GM12878 (cell line): ENCODE measurements at regions of chr4 and their contacts with region 1.

Region 1: GRCh38 chr4:159446266-159446976 is 343.5 kb downstream of the RAPGEF2 start:
- DNase-seq: peak; percentile 26
- ATAC-seq: peak; percentile 100
- H3K4me3 ChIP-seq: no peak overlapping the region
- H3K27ac ChIP-seq: no peak overlapping the region
- H3K4me1 ChIP-seq: no peaks in the 10 kb centered on the region
- H3K27me3 ChIP-seq: no peaks in the 10 kb centered on the region
- CTCF ChIP-seq: peak; percentile 76 to 90 (median 86)
- EP300 ChIP-seq: no peak
- POLR2A ChIP-seq: no peak
- RAD21 ChIP-seq: peak; percentile 95

Region 2: GRCh38 chr4:158496030-158496741 is 950.2 kb before region 1 on chr4:
- CTCF ChIA-PET with region 1: no interaction called
- POLR2A ChIA-PET with region 1: no interaction called
- RAD21 ChIA-PET with region 1: no interaction called
- SMC1A ChIA-PET with region 1: no interaction called
- in situ Hi-C with region 1: no loop called
- intact Hi-C with region 1: loop called (anchors 2 kb)
- DNase-seq: no peak
- ATAC-seq: peak; percentile 59
- H3K4me3 ChIP-seq: no peak overlapping the region
- H3K27ac ChIP-seq: no peak overlapping the region
- H3K4me1 ChIP-seq: no peaks in the 10 kb centered on the region
- H3K27me3 ChIP-seq: no peaks in the 10 kb centered on the region; a peak in 1 of 4 replicates
- CTCF ChIP-seq: peak; percentile 47 to 72 (median 53); a peak in 5 of 6 replicates
- EP300 ChIP-seq: no peak
- POLR2A ChIP-seq: no peak
- RAD21 ChIP-seq: peak; percentile 39

Region 3: DNA sequence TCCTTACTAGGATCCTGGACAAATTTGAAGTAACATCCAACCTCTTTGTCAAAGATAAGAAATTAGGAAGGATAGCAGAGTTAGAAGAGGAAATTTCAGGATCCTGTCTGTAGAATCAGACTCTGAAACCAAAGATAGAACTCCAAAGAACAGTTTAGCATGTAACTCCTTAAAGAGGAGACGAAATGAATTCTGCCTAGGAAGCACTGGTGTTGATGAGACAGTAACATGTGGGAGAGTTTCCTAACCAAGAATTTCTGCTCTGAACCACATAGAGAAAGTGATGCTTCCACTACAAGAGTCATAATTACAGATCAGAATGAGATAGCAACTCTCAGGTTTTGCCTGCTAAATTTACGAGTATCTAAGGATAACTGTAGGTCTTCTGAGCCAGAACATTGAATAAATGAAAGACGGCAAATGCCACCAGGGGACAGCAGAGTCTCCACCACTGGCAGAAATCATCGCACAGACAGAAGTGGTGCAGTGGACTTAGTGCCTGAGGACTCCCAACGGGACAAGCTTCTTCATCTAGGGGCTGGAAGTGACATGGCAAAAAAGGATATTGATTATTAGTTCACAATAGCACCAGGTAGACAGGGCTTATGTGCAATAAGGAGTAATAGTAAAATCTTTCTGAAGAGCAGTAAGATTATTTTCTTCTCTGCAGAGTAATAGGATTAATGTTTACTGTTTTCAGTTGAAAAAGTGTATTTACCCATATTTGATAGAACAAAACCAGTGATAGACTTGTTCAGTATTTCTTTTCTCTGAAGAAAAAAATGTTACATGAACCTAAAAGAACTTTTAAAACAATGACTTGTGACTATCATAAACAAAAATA is 716.5 kb before region 1 on chr4:
- CTCF ChIA-PET with region 1: no interaction called
- POLR2A ChIA-PET with region 1: no interaction called
- RAD21 ChIA-PET with region 1: no interaction called
- SMC1A ChIA-PET with region 1: no interaction called
- in situ Hi-C with region 1: loop called (anchors 5 kb)
- intact Hi-C with region 1: loop called (anchors 1 kb)
- DNase-seq: peak; percentile 44
- ATAC-seq: peak; percentile 97
- H3K4me3 ChIP-seq: no peak overlapping the region
- H3K27ac ChIP-seq: no peak overlapping the region
- H3K4me1 ChIP-seq: no peaks in the 10 kb centered on the region
- H3K27me3 ChIP-seq: peaks cover 0 to 2% of the 10 kb centered on the region in 2 experiments; a peak in 1 of 4 replicates
- CTCF ChIP-seq: peak; percentile 81 to 97 (median 85)
- EP300 ChIP-seq: no peak
- POLR2A ChIP-seq: no peak
- RAD21 ChIP-seq: peak; percentile 85

Region 4: GRCh38 chr4:159175085-159175988 is 271.1 kb before region 1 on chr4:
- CTCF ChIA-PET with region 1: no interaction called
- POLR2A ChIA-PET with region 1: no interaction called
- RAD21 ChIA-PET with region 1: no interaction called
- SMC1A ChIA-PET with region 1: no interaction called
- in situ Hi-C with region 1: no loop called
- intact Hi-C with region 1: loop called (anchors 10 kb)
- DNase-seq: peak; percentile 73
- ATAC-seq: peak; percentile 82
- H3K4me3 ChIP-seq: peak overlapping the region; percentile 60
- H3K27ac ChIP-seq: no peak overlapping the region; the same call in 1 of the 2 replicates
- H3K4me1 ChIP-seq: peaks cover 58% of the 10 kb centered on the region
- H3K27me3 ChIP-seq: no peaks in the 10 kb centered on the region
- CTCF ChIP-seq: peak; percentile 59 to 85 (median 75)
- EP300 ChIP-seq: no peak
- POLR2A ChIP-seq: no peak
- RAD21 ChIP-seq: peak; percentile 98

Region 5: GRCh38 chr4:159264057-159264456 is 182.4 kb before region 1 on chr4:
- CTCF ChIA-PET with region 1: no interaction called
- POLR2A ChIA-PET with region 1: no interaction called
- RAD21 ChIA-PET with region 1: no interaction called
- SMC1A ChIA-PET with region 1: no interaction called
- in situ Hi-C with region 1: no loop called
- intact Hi-C with region 1: loop called (anchors 5 kb)
- DNase-seq: no peak
- ATAC-seq: no peak
- H3K4me3 ChIP-seq: no peak overlapping the region
- H3K27ac ChIP-seq: no peak overlapping the region
- H3K4me1 ChIP-seq: no peaks in the 10 kb centered on the region
- H3K27me3 ChIP-seq: no peaks in the 10 kb centered on the region
- CTCF ChIP-seq: no peak
- EP300 ChIP-seq: no peak
- POLR2A ChIP-seq: no peak
- RAD21 ChIP-seq: no peak